ENCODE measurements at regions of chr15 and their contacts with region 1.

Region 1: GRCh38 chr15:89057504-89058133 is 30.6 kb upstream of the ABHD2 start:
- DNase-seq: peak; percentile 57 to 90
- H3K4me3 ChIP-seq: no peak overlapping the region
- H3K27ac ChIP-seq: no peak overlapping the region
- H3K4me1 ChIP-seq: no peaks in the 10 kb centered on the region
- H3K27me3 ChIP-seq: no peaks in the 10 kb centered on the region
- CTCF ChIP-seq: peak; percentile 98

Region 2: DNA sequence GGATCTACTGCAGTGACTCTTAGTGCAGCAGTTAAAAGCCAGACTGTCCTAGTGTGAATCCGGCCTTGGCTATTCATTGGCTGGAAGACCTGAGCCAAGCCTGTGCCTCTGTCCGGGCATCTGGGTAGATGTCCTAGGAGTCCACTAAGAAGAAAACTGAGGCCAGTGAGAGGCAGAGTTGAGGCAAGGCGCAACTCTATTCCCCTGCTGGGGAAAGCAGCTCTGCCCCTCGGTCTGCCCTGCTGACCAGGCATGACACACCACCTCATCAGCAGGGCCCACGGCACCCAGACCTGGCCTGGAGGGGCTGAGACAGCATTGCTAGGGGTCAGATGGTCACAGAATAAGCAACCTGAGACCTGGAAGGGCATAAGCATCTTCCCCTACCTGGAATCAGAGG is 16.1 kb before region 1 on chr15:
- CTCF ChIA-PET with region 1: no interaction called
- POLR2A ChIA-PET with region 1: no interaction called
- intact Hi-C with region 1: no loop called
- DNase-seq: no peak
- H3K4me3 ChIP-seq: no peak overlapping the region
- H3K27ac ChIP-seq: no peak overlapping the region
- H3K4me1 ChIP-seq: no peaks in the 10 kb centered on the region
- H3K27me3 ChIP-seq: peaks cover 7% of the 10 kb centered on the region; the same call in 1 of the 2 replicates
- CTCF ChIP-seq: no peak

Region 3: DNA sequence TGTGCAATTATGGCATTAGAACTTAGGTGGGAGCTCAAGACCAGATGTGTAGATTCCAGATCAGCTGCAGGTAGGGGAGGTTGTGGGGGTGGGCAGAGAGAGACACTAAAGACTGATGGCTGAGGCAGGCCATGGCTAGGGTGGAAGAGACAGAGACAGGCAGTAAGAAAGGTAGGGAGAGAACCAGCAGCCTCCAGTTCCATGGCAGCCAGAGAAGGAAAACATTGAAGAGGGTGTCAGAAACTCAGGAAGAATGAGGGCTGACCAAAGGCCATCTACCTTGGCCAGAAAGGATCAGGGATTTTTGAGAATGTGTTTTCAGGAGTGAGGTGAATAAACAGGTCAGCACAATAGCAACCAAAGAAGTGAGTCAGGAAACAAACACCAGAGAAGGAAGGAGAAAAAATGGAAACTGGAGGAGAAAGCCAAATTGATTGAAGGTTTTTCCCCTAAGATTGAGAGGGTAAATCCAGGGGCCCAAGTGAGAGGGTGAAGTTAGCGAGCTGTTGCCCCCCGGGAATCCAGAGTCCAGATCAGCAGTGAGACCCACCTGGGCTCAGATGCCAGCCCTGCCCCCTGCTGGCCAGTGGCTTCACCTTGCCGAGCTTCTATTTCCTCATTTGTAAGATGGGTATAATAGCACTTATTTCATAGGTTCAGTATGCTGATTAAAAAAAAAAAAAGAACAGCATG is 71.7 kb after region 1 on chr15:
- CTCF ChIA-PET with region 1: interaction called, 12 read pairs
- POLR2A ChIA-PET with region 1: no interaction called
- intact Hi-C with region 1: loop called (anchors 2 kb)
- DNase-seq: peak in 1 of 2 experiments; percentile 54
- H3K4me3 ChIP-seq: no peak overlapping the region
- H3K27ac ChIP-seq: peak overlapping the region; percentile 40
- H3K4me1 ChIP-seq: peaks cover 51% of the 10 kb centered on the region
- H3K27me3 ChIP-seq: no peaks in the 10 kb centered on the region
- CTCF ChIP-seq: peak; percentile 81

Region 4: DNA sequence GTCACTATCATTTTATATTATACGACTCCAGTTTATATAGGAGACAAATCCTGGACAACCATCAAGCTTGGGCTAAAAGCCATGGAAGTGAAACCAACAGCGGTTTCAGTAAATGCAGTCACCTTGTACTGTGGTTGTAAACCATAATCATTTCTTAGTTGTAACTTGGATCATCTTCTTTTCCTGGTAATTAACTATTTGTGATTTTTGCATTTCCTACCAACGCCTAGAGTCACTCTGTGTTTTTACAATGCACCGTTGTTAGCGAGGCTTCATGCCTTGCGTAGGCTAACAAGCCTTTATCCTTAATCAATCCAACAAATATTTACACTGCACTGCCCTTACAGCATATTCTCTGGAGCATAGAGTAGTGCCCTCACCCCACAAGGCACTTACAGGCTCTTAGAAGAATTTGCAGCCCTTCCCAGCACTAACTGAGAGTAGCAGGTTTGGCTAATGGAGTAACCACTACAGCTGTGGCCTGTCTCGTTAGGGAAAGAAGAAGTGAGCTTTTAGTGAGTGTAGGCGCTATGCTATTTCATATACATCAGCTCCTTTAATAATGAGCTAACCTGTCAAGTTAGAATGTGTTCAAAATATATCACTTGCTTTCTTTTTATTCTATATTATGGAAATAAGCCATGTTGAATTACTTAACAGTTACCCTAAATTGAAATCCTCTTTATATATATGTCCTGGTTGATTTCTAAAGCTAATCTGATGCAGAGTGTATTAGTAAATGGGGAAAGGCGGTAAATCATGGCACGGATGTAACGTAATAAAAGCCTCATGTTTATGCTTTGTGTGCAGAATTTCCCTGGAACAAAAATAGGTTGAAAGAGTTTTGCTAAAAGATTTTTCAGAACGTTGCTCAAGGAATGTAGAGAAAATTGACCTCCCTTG is 93.4 kb after region 1 on chr15:
- CTCF ChIA-PET with region 1: interaction called, 13 read pairs
- POLR2A ChIA-PET with region 1: no interaction called
- intact Hi-C with region 1: no loop called
- DNase-seq: no peak
- H3K4me3 ChIP-seq: no peak overlapping the region
- H3K27ac ChIP-seq: no peak overlapping the region
- H3K4me1 ChIP-seq: no peaks in the 10 kb centered on the region
- H3K27me3 ChIP-seq: no peaks in the 10 kb centered on the region
- CTCF ChIP-seq: no peak

Region 5: DNA sequence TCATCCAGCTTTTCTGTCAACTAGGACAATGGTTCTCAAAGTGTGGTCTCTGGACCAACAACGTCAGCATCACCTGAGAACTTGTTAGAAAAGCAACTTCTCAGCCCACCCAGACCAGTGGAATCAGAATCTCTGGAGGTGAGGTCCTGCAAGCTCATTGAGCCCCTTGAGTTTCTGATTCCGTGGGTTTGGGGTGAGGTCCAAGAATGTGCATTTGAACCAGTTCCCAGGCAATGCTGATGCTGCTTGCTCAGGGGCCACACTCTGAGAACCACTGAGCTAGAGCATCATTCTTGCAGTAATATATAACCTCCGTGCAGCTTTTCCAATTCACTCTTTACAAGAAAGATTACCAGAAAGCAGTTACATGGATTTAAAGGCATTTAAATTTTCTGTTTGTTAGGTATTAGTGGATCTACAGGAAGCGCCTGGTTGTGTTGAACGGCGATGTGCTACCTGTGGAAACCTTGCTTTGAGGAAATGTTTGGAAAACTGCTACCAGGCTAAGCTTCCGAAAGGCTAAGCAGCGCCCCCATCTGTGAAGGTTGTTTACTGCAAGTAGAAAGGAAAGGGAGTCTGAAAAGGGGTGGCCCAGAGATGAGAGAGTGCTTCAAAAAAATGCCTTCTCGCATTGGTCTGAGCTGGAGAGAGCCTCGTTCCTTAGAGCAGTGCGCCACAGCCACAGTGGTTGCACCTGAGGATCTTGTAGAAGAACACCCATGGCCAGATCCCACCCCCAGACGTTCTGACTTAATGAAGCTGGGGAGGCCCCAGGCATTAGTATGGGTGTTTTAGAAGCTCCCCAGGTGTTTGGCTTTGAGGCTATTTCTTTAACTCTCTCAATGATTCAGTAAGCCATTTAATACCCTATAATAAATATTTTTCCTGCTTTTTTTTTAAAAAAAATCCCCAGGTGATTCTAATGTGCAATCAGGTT is 113.8 kb after region 1 on chr15:
- CTCF ChIA-PET with region 1: interaction called, 9 read pairs
- POLR2A ChIA-PET with region 1: interaction called, 4 read pairs
- intact Hi-C with region 1: loop called (anchors 1 kb)
- DNase-seq: peak; percentile 43 to 52
- H3K4me3 ChIP-seq: no peak overlapping the region
- H3K27ac ChIP-seq: no peak overlapping the region
- H3K4me1 ChIP-seq: peaks cover 23% of the 10 kb centered on the region
- H3K27me3 ChIP-seq: no peaks in the 10 kb centered on the region
- CTCF ChIP-seq: peak; percentile 84

Region 6: GRCh38 chr15:89177633-89178306 is 120.2 kb after region 1 on chr15:
- CTCF ChIA-PET with region 1: interaction called, 6 read pairs
- POLR2A ChIA-PET with region 1: no interaction called
- intact Hi-C with region 1: loop called (anchors 1 kb)
- DNase-seq: peak; percentile 46 to 50
- H3K4me3 ChIP-seq: no peak overlapping the region
- H3K27ac ChIP-seq: no peak overlapping the region
- H3K4me1 ChIP-seq: no peaks in the 10 kb centered on the region
- H3K27me3 ChIP-seq: no peaks in the 10 kb centered on the region
- CTCF ChIP-seq: peak; percentile 88

Region 7: DNA sequence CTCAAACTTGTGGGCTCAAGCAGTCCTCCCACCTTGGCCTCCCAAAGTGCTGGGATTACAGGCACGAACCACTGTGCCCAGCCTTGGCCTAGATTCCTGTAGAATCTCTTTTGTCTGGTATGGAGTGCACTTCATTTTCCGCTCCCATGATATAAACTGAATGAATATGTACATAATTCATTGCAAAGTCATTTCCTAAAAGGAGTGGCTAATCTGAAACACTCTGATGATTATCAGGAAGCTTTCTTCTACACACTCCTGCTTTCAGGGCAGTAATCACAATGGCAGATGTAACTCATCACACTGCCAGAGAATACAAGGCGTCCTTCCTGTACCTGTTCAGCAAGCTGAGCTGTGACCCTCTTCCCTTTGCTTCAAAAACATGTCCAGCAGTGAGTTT is 135.1 kb after region 1 on chr15:
- CTCF ChIA-PET with region 1: no interaction called
- POLR2A ChIA-PET with region 1: no interaction called
- intact Hi-C with region 1: loop called (anchors 5 kb)
- DNase-seq: no peak
- H3K4me3 ChIP-seq: no peak overlapping the region
- H3K27ac ChIP-seq: no peak overlapping the region
- H3K4me1 ChIP-seq: no peaks in the 10 kb centered on the region
- H3K27me3 ChIP-seq: no peaks in the 10 kb centered on the region
- CTCF ChIP-seq: no peak